Psoas muscle (tissue), 8 donors: ENCODE measurements at regions of chr2 and their contacts with region 1.

Region 1: DNA sequence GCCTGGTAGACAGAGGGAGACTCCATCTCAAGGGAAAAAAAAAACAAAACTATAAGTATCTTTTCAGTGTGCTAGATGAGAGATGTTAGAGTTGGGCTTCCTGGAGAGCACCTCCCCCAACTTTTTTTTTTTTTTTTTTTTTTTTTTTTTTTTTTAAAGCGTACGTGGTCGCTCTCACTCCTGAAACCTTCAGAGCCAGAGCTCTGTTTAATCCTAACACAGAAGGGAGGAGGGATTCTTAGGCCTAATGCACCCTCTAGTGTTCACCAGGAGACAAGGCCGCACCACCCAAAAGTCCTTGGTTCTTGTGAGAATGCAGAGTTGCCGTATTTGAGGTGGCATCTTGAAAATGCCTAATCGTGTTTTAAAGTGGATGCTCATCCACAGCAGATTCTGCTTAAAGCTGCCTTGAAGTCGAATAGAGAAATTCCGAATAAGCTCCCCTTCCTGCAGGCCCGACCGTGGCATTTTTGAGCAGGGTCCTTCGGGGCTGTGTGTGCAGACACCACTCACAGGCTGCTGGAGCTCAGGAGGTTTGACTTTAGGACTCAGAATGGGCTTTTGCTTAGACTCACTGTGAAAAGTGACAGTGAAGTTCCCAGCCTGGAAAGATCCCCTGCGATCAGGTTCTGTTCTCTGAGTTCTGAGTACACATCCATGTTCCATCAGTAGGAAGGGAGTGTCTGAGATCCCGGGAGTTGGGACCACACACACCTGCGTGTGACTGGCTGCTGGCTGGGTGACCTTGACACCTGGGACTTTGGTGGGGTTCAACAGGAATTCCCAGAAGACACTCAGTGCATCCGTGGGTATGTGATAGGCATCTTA is 252.6 kb downstream of the AGAP1 start:
- DNase-seq: peak in 1 of 2 donors; percentile 48
- ATAC-seq: peak; percentile 79 to 93 (median 89)
- H3K4me3 ChIP-seq: no peak overlapping the region
- H3K27ac ChIP-seq: no peak overlapping the region
- H3K4me1 ChIP-seq: peaks cover 16% of the 10 kb centered on the region
- H3K27me3 ChIP-seq: no peaks in the 10 kb centered on the region
- CTCF ChIP-seq: peak; percentile 79

Region 2: GRCh38 chr2:235135990-235136561 is 610.4 kb before region 1 on chr2:
- intact Hi-C with region 1: loop called (anchors 2 to 5 kb)
- DNase-seq: peak; percentile 75 to 83
- ATAC-seq: peak; percentile 58 to 73 (median 64)
- H3K4me3 ChIP-seq: no peak overlapping the region
- H3K27ac ChIP-seq: no peak overlapping the region
- H3K4me1 ChIP-seq: no peaks in the 10 kb centered on the region
- H3K27me3 ChIP-seq: no peaks in the 10 kb centered on the region
- CTCF ChIP-seq: peak; percentile 68

Region 3: DNA sequence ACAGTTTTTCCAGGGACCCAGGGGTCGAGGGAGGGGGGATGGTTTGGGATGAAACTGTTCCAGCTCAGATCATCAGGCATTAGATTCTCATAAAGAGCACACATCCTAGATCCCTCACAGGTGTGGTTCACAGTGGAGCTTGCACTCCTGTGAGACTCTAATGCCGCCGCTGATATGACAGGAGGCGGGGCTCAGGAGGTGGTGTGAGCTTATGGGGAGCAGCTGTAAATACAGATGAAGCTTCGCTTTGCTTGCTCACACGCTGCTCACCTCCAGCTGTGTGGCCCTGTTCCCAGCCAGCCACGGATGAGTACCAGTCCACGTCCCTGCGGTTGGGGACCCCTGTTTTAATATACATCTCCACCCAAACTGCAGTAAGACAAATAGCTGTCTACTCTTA is 48.4 kb before region 1 on chr2:
- intact Hi-C with region 1: no loop called
- DNase-seq: no peak
- ATAC-seq: no peak
- H3K4me3 ChIP-seq: no peak overlapping the region
- H3K27ac ChIP-seq: no peak overlapping the region
- H3K4me1 ChIP-seq: peaks cover 11% of the 10 kb centered on the region
- H3K27me3 ChIP-seq: no peaks in the 10 kb centered on the region
- CTCF ChIP-seq: no peak